ENCODE measurements at regions of chr17 and their contacts with region 1.

Region 1: DNA sequence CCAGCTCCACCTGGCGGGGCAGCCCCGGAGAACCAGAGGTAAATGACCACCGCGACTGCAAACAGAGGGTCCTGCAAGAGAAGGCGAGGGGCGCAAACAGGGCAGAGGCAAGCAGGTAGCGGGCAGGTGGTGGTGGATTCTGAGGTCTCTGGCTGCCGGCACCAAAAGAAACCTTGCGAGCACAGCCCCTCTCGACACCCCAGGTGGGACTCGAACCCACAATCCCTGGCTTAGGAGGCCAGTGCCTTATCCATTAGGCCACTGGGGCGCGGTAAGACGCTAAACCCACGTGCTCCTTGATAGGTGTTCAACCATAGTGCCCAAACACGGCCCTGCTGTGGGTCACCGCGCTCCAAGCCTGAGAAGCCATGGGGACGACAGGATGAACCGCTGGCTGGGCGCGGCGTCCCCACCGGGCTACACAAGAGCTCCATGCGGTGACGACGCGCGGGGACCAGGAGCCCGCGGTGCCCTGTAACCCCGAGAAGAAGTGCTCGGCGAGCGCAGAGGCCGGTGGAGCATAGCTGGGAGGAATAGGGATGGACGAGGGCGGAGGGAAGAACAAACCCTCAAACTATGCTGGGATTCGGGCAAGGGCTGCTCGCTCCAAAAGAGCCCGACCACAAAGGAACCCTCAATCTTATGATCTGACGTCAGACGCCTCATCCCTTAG is 12.4 kb downstream of the ATP5PD start:
- DNase-seq: peak; percentile 87 to 97 (median 90)
- H3K4me3 ChIP-seq: peak overlapping the region in 3 of 4 donors; percentile 60 to 71 (median 68)
- H3K27ac ChIP-seq: peak overlapping the region; percentile 77 to 94 (median 79)
- H3K4me1 ChIP-seq: peaks cover 26 to 34% of the 10 kb centered on the region in 2 donors
- H3K27me3 ChIP-seq: no peaks in the 10 kb centered on the region
- CTCF ChIP-seq: peak in 1 of 6 experiments; percentile 35
- POLR2A ChIP-seq: peak in 1 of 2 donors; percentile 22

Region 2: DNA sequence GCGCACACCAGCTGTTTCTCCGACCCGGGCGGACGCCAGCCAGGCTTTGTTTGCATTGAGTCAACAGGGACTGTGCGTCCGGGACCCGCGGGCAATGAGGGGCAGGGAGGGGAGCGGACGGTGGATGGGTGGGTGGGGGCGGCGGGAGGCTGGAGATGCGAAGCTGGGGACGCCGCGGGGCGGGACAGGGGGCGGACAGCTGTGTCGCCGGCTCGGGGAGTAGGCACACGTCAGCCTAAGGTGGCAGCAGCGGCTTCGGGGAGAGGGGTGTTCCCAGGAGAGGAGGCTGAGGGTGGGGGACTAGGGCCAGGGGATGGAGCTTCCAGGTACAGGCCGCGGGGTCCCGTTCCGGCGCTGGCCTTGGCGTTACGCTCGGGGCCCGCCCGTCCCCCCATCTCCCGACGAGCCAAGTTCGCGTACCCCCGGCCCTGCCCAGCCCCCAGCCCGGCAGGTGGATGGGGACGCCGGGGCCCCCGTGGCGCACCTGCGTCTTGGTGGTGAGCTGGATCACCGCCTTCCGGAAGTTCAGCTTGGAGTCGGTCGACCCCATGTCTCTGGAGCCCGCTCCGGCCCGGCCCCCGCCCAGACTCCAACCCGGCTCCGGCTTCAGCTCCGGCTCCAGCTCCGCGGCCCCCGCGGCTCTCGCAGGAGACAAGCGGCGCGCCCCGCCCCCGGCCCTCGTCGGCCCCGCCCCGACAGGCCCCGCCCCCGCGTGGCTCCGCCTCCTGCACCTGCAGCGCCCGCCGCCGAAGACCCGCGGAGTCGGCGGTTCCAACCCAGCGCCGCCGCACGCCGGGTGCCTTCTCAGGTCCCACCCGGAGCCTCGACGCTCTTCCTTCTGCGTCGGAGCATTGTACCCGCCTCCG is 62.0 kb before region 1 on chr17 and contains the start of gene HID1:
- intact Hi-C with region 1: loop called in 1 of 2 experiments (anchors 10 kb)
- DNase-seq: peak in 6 of 7 donors; percentile 45 to 79 (median 60)
- H3K4me3 ChIP-seq: peak within 1 kb of the TSS in 2 of 4 donors; percentile 19 to 69
- H3K27ac ChIP-seq: peak within 1 kb of the TSS in 2 of 5 donors; percentile 38 to 52
- H3K4me1 ChIP-seq: peaks cover 0 to 13% of the 10 kb centered on the region in 2 donors
- H3K27me3 ChIP-seq: peaks cover 5% of the 10 kb centered on the region
- CTCF ChIP-seq: no peak
- POLR2A ChIP-seq: no peak
- total RNA-seq, gene HID1: 2.8 to 15.1 (median 6.6) TPM

Region 3: DNA sequence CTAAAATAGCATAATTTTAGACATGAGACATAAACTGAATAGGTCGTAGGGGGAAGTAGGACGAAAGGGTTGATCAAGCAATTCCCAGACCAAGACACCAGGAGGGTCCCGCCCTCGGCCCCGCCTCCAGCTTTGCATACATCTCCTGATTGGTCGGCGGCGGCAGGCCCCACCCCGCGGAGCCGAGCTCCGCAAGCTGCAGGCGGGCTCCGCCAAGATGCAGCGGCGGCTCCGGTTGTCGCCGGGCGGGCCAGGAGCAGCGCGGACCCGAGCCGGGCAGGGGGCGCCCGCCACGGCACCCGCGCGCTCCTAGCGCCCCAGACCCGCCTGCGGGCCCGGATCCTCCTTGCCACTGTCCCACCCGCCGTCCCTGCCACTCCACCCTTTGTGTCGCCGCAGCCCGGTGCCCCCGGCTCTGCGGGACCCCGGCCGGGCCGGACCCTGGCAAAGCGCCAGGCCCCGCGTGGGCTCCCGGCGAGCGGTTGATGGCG is 46.9 kb before region 1 on chr17 and contains the start of gene CDR2L:
- intact Hi-C with region 1: no loop called
- DNase-seq: peak; percentile 95 to 99 (median 98)
- H3K4me3 ChIP-seq: peak within 1 kb of the TSS; percentile 15 to 96 (median 50)
- H3K27ac ChIP-seq: peak within 1 kb of the TSS; percentile 60 to 93 (median 84)
- H3K4me1 ChIP-seq: peaks cover 21 to 22% of the 10 kb centered on the region in 2 donors
- H3K27me3 ChIP-seq: no peaks in the 10 kb centered on the region
- CTCF ChIP-seq: peak in 1 of 6 experiments; percentile 7
- POLR2A ChIP-seq: peak; percentile 89 to 95
- total RNA-seq, gene CDR2L: 1.2 to 17.9 (median 11.5) TPM

Region 4: DNA sequence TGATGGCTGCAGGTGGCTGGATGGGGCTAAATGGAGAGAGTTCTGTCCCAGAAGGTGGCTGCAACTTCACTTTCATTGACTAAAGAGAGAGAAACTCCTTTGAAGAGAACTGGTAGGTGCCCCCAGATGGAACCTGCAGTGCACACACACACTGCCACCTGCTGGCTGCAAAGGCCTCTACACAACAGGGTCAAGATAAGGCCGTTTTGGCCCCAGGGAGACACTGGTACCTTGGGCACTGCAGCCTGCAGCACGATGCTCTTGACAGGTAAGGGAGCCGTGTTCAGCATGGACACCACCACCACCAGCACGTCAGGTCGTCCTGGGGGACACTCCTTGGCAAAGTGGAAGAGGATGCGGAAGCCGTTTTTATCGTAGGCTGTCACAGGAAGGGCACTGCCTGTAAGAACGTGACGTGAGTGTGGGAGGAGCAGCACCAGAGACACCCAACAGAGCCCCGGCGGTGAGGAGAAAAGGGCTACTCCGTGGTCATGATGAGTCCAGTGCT is 204.4 kb after region 1 on chr17:
- intact Hi-C with region 1: no loop called
- DNase-seq: peak; percentile 33 to 75 (median 64)
- H3K4me3 ChIP-seq: no peak overlapping the region
- H3K27ac ChIP-seq: peak overlapping the region in 1 of 5 donors; percentile 47
- H3K4me1 ChIP-seq: no peaks in the 10 kb centered on the region
- H3K27me3 ChIP-seq: no peaks in the 10 kb centered on the region
- CTCF ChIP-seq: peak; percentile 61 to 72 (median 68)
- POLR2A ChIP-seq: no peak